SK-N-SH (cell line): ENCODE measurements at regions of chr5 and their contacts with region 1.

Region 1: DNA sequence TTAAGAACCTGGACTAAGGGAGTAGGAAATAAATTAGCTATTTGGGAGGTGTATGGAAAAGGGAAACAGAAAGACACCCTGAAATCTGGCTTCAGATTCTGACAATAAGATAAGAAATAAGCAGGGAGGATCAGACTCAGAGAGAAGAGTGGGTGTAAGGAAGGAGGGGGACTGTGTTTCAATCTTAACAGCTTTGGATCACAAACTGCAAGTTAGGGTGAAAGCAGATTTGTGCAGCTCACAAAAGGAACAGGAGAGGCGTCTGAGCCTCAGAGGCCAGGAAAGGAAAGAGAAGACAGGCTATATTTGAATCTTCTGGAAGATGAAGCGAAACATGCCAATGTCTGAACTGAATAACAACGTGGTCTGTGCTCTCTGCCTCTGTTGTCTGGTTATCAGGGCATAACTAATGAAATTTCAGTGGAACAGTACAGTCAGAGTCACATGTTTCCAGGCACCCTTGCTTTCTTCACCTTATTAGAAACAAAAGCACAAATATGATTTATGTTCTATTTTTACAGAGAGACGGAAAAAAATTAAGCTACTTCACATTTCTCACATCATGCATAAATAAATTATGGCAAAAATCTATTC is 26.6 kb downstream of the SGTB start:
- DNase-seq: peak; percentile 62
- H3K4me3 ChIP-seq: no peak overlapping the region
- H3K27ac ChIP-seq: peak overlapping the region in 1 of 2 experiments; percentile 78; a peak in 2 of 4 replicates
- H3K4me1 ChIP-seq: peaks cover 0 to 7% of the 10 kb centered on the region in 2 experiments; a peak in 3 of 4 replicates
- H3K27me3 ChIP-seq: no peaks in the 10 kb centered on the region
- CTCF ChIP-seq: no peak
- EP300 ChIP-seq: peak in 1 of 2 experiments; percentile 37; a peak in 1 of 4 replicates
- RAD21 ChIP-seq: no peak

Region 2: DNA sequence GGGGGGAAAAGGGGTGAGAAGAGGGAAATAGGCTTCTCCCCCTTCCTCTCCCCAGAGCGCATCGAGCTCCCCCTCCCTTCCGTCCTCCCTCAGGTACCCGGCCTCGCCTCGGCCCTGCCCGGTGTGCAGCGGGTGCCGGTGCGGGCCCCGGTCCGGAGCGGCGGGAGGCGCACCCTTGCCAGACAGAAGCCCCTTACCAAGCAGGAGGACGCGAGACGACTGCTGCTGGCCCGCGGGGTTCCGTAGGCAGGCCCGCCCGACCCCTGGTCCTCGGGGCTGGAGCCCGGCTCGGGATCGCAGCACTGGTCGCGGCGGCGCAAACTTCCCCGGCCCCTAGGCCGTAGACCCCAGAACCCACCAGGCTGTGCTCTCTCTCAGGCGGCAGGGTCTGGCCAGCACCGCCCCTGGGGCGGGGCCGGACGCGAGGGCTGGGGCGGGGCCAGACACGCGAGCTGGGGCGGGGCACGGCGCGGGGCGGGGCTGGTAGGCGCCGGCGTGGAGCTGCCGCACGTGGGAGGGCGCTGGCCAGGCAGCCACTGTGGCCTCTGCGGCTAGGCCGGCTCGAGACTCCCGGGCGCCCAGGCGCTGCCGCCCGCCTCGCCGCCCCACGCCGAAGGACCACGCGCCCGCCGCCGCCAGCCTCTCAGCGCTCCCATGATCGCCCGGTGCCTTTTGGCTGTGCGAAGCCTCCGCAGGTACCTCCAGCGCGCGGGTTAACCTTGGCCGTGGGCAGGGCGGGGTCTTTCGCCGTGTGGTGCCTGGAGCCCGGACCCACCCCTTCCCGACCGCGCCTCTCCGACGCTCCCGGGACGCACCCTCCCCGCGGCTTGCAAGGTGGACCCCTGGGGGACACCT is 26.7 kb after region 1 on chr5 and contains the starts of genes NLN and SGTB:
- CTCF ChIA-PET with region 1: no interaction called
- POLR2A ChIA-PET with region 1: interaction called, 10 read pairs
- DNase-seq: peak; percentile 99
- H3K4me3 ChIP-seq: peak within 1 kb of the TSS; percentile 72 to 96
- H3K27ac ChIP-seq: peak within 1 kb of the TSS; percentile 66 to 85
- H3K4me1 ChIP-seq: peaks cover 6% of the 10 kb centered on the region in 2 experiments; a peak in 3 of 4 replicates
- H3K27me3 ChIP-seq: no peaks in the 10 kb centered on the region
- CTCF ChIP-seq: no peak
- EP300 ChIP-seq: no peak
- RAD21 ChIP-seq: no peak
- polyA plus RNA-seq, gene NLN: 17.1 and 20.0 TPM in 2 replicates
- polyA plus RNA-seq, gene SGTB: 3.5 and 4.9 TPM in 2 replicates